ENCODE measurements at regions of chr1 and their contacts with region 1.

Region 1: GRCh38 chr1:212368073-212368484 is 46.6 kb downstream of the PACC1 start:
- DNase-seq: no peak

Region 2: DNA sequence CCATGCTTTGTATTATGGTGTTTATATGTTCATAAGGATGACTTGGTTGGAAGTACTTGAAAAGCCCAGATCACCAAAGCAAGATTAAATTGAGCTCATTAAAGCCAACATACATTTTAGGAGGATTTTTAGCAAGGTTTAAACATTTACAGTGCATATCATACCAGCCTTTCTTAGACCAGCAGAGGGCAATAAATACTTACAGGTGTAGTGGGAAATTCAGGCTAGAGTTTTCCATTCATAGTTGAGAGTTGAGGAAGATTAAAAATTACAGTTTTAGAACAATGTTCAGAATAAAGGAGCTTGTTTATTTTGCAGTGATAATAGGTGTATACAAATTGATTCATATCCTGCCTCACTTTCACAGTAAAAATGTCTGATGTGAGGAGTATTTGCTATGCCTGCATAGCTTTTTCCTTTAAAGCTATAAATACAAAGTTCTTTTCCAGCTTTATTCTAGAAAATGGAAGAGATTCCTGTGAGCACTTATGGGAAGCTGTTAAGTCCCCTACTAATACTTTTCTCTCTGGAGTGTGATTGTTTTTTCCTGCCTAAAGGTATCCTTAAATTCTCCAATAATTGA is 297.3 kb before region 1 on chr1:
- intact Hi-C with region 1: loop called in 1 of 2 experiments (anchors 5 kb)
- DNase-seq: no peak

Region 3: GRCh38 chr1:213606252-213606820 is 1238.3 kb after region 1 on chr1:
- intact Hi-C with region 1: no loop called
- DNase-seq: no peak

Measured in posterior vena cava (tissue), 2 donors.